Posterior vena cava (tissue), 2 donors: ENCODE measurements at regions of chr11 and their contacts with region 1.

Region 1: GRCh38 chr11:62394825-62395538 is 23.9 kb upstream of the SCGB1A1 start:
- DNase-seq: peak; percentile 93

Region 2: DNA sequence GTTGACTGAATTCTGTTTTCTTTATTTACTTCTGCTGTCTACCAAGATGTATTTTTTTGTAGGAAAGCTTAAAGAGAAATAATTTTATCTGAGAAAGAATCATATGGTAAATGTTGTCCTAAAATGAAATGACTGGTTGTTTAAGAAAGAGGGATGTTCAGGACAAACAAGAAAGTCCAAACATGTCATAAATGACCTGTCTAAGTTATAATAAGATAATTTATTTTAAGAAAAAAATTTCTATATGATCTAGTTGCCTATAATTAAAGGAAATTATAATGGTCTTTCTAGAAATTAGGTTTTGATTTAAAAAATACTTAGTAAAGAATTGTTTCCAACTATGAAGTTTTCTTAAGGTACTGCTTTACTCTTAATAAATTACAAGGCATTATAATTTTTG is 114.5 kb before region 1 on chr11:
- intact Hi-C with region 1: no loop called
- DNase-seq: no peak

Region 3: DNA sequence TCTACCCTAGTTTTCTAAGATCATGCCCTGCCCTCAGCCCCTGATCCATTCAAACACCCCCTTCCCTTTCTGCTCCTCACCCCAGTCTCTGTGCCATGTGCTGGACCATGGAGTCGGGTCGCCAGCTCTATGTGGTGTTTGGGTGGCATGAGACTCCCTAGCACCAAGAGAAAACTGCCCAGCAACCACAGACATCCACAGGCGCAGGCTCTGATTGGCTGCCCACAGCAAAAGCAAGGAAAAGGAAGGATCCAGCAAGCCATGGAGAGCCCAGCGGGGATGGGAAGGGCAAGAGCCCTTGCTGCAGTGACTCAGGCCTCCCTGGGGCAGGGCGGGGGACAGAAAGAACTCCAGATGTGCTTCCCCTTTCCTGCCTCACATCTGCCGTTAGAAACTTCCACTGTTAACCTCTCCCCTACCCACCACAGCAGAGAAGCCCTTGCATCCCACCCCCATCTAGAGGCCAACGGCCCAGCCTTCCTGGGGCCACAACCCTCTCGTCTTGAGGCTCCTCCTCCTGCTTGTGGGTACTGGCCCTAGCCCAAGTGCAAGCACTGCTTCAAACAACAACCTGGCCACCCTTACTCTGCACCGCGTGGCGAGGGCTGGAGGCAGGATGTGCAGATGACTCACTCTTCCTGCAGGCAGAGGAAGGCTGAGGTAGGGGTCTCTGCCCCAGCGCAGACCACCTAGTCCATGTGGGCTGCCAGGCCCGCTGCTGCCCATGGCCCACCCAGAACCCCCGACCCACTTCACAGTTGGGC is 161.3 kb after region 1 on chr11:
- intact Hi-C with region 1: loop called in 1 of 2 experiments (anchors 5 kb)
- DNase-seq: peak; percentile 97

Region 4: GRCh38 chr11:62694455-62695167 is 299.6 kb after region 1 on chr11:
- intact Hi-C with region 1: loop called (anchors 5 to 10 kb)
- DNase-seq: peak; percentile 93